Activated CD8-positive, alpha-beta T cell treated with anti-CD3 and anti-CD28 coated beads, Interleukin-2, amount 10 ng/mL, durations not matched to agents 7 days and 5 days (primary cell): ENCODE measurements at regions of chr22 and their contacts with region 1.

Region 1: DNA sequence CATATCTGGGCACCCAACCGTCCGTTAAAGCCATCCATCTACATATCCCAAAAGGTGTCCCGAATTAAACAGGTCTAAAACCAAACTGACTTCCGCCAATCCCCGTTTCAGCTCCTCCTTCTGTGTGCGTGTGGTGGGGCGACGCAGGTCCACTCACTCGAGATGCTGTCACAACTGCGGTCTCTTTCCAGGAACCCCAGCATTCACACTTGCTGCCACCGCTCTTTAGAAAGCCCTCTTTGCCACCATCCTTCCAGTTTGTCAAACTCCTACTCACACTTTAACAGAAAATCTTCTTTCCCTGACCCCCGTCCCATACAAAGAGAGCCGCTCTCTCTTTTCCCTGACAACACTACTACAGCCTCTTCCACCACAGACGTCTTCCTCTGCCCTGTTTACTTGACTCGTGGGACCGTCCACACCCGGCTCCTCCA is 467 bp downstream of the ESS2 start:
- DNase-seq: peak; percentile 67
- ATAC-seq: peak; percentile 45
- H3K4me3 Mint-ChIP-seq: peak overlapping the region; percentile 99
- H3K27ac Mint-ChIP-seq: peak overlapping the region; percentile 95
- H3K4me1 Mint-ChIP-seq: peaks cover 17% of the 10 kb centered on the region
- H3K27me3 Mint-ChIP-seq: peaks cover 17% of the 10 kb centered on the region

Region 2: DNA sequence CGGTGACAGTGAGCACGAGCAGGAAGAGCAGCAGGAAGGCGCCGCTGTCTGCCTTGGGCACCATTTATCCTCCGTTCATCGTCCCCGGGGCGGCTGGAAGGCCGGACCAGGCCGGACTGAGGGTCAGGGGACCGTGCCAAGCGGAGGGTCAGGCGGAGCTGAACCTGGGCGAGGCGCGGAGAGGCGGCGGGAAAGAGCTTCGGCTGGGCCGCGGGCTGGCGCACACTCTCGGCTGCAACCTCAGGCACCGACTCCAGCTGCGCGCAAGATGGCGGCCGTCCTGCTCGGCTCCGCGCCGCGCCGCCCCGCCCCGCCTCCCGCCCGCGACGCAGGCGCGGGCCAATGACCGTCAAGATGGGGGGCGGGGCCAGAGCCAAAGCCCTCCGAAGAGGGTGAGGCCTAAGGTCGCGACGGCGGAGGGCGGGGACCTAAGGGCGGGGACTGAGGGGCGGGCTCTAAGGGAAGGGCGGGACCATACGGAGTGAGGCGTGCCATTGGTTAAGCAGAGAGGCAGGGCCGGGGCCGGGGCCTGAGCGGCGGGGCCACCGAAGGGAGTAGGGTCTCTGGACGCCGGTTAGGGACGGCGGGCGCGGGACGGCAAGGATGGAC is 21.7 kb before region 1 on chr22 and contains the start of gene DGCR2:
- CTCF ChIA-PET with region 1: interaction called, 12 read pairs
- POLR2A ChIA-PET with region 1: interaction called, 20 read pairs
- DNase-seq: peak; percentile 96
- ATAC-seq: peak; percentile 96
- H3K4me3 Mint-ChIP-seq: peak within 1 kb of the TSS; percentile 89
- H3K27ac Mint-ChIP-seq: peak within 1 kb of the TSS; percentile 78
- H3K4me1 Mint-ChIP-seq: peaks cover 45% of the 10 kb centered on the region
- H3K27me3 Mint-ChIP-seq: no peaks in the 10 kb centered on the region
- total RNA-seq, gene DGCR2: 30.5 to 34.2 TPM

Region 3: GRCh38 chr22:19178656-19179496 is 34.9 kb after region 1 on chr22 and contains the start of gene SLC25A1:
- CTCF ChIA-PET with region 1: interaction called, 14 read pairs
- POLR2A ChIA-PET with region 1: interaction called, 5 read pairs
- DNase-seq: peak; percentile 88
- ATAC-seq: peak; percentile 86
- H3K4me3 Mint-ChIP-seq: peak within 1 kb of the TSS; percentile 78
- H3K27ac Mint-ChIP-seq: peak within 1 kb of the TSS; percentile 60
- H3K4me1 Mint-ChIP-seq: peaks cover 40% of the 10 kb centered on the region
- H3K27me3 Mint-ChIP-seq: no peaks in the 10 kb centered on the region
- total RNA-seq, gene SLC25A1: 69.1 to 73.0 TPM

Region 4: DNA sequence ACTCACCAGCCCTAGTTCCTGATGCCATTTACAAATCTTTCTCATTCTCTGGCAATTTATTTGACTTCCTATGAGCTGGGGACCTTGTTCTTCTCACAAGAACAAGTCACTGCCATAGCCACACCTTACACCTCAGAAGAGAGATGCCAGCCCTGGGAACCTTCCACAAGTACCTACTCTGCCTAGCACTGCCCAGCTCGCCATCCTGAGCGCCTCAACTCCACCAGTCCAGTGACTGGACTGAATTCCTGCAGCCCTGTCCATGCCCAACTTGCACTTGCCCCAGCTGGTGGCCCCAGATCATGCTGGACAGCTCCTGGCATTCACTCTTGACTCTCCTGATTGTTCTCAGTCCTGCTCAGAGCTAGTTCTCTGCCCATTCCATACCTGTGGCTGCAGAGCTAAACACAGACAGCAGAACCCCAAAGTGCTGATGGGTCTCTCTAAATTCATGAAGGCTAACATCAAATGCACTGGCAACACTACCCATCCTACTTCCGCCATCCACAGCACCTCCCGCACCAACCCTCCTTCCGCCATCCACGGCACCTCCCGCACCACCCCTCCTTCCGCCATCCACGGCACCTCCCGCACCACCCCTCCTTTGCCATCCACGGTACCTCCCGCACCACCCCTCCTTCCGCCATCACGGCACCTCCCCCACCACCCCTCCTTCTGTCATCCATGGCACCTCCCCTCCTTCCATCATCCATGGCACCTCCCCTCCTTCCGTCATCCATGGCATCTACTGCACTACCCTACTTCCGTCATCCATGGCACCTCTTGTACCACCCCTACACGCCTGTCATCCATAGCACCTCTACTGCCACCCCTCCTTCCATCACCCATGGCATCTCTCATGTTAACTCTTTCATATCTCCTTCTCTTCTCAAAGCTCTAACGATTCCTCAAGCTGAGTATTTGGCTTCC is 58.1 kb after region 1 on chr22:
- CTCF ChIA-PET with region 1: no interaction called
- POLR2A ChIA-PET with region 1: no interaction called
- DNase-seq: no peak
- ATAC-seq: no peak
- H3K4me3 Mint-ChIP-seq: no peak overlapping the region
- H3K27ac Mint-ChIP-seq: no peak overlapping the region
- H3K4me1 Mint-ChIP-seq: no peaks in the 10 kb centered on the region
- H3K27me3 Mint-ChIP-seq: peaks cover 16% of the 10 kb centered on the region

Region 5: GRCh38 chr22:19330865-19331418 is 187.0 kb after region 1 on chr22:
- CTCF ChIA-PET with region 1: no interaction called
- POLR2A ChIA-PET with region 1: no interaction called
- DNase-seq: no peak
- ATAC-seq: no peak
- H3K4me3 Mint-ChIP-seq: no peak overlapping the region
- H3K27ac Mint-ChIP-seq: no peak overlapping the region
- H3K4me1 Mint-ChIP-seq: no peaks in the 10 kb centered on the region
- H3K27me3 Mint-ChIP-seq: no peaks in the 10 kb centered on the region

Region 6: GRCh38 chr22:19479357-19480172 is 335.6 kb after region 1 on chr22 and contains the start of gene CDC45:
- CTCF ChIA-PET with region 1: interaction called, 15 read pairs
- POLR2A ChIA-PET with region 1: interaction called, 8 read pairs
- DNase-seq: peak; percentile 98
- ATAC-seq: peak; percentile 94
- H3K4me3 Mint-ChIP-seq: peak within 1 kb of the TSS; percentile 99
- H3K27ac Mint-ChIP-seq: peak within 1 kb of the TSS; percentile 98
- H3K4me1 Mint-ChIP-seq: peaks cover 30% of the 10 kb centered on the region
- H3K27me3 Mint-ChIP-seq: no peaks in the 10 kb centered on the region
- total RNA-seq, gene CDC45: 90.2 to 94.3 TPM